ENCODE measurements at regions of chr4 and their contacts with region 1.

Region 1: GRCh38 chr4:15001869-15002658 is at the start of gene CPEB2:
- DNase-seq: peak; percentile 94 to 98
- H3K4me3 ChIP-seq: peak within 1 kb of the TSS; percentile 93 to 95
- H3K27ac ChIP-seq: peak within 1 kb of the TSS; percentile 99 to 100
- H3K4me1 ChIP-seq: peaks cover 0 to 20% (median 0%) of the 10 kb centered on the region in 4 donors
- H3K27me3 ChIP-seq: no peaks in the 10 kb centered on the region
- CTCF ChIP-seq: no peak

Region 2: DNA sequence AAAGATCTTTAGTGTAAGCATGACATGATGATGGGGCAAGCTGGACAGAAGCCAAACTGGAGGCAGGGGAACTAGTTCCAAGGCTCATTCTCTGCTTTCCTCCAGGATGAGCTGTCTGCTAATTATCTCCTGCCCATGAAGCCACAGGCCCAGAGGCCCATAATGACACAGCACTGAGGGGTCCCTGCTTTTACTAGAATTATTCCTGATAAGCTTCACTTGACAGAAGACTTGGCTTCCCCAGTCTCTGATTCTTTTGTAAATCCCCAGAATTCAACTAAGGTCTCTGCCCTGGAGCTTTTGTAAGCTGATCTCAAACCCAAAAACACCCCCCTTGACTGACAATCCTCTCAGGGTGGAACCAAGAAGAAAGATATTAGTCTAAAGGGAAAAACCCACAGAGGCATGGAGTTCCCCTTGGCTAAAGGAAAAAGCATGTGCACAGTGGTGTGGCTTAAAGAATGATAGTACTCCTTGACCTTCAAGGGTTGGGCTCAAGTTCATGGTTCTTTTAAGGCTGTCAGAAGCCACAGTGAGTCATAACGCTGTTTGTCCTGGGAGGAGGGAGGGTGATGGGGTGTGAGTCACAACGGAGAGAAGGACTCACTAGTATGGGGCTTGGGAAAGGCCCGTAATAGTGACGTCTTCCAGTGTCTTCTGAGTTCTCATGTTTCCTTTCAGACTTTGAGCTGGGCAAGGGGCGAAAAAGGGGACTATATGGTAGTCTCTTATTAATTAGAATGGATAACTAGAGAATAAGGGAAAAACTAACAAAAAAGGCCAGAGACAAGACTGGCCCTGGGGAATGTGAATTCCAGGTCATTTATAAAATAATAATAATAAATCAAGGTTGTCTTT is 145.8 kb before region 1 on chr4:
- intact Hi-C with region 1: loop called (anchors 10 kb)
- DNase-seq: peak; percentile 82 to 87
- H3K4me3 ChIP-seq: no peak overlapping the region
- H3K27ac ChIP-seq: peak overlapping the region; percentile 70 to 74
- H3K4me1 ChIP-seq: peaks cover 0 to 29% (median 11%) of the 10 kb centered on the region in 4 donors
- H3K27me3 ChIP-seq: no peaks in the 10 kb centered on the region
- CTCF ChIP-seq: no peak

Region 3: DNA sequence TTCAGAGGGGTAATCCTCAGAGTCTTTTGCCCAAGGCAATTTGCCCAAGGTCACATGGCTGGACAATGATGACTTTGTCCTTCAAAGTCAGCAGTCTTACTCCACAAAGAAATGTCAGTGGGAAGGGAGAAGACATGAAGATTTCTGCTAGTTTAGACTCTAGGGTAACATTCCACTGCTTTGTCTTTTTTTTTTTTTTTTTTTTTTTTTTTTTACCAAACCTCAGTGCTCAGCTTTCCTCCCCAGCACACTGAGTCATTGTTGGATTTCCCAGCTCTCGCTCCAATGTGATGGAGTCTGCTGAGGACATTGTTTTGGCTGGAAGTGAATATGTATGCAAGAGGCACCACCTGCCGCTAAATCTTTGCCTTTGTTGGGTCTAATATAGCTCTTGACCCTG is 418.6 kb after region 1 on chr4:
- intact Hi-C with region 1: loop called (anchors 10 kb)
- DNase-seq: no peak
- H3K4me3 ChIP-seq: no peak overlapping the region
- H3K27ac ChIP-seq: peak overlapping the region; percentile 71 to 75
- H3K4me1 ChIP-seq: peaks cover 0 to 98% (median 52%) of the 10 kb centered on the region in 4 donors
- H3K27me3 ChIP-seq: no peaks in the 10 kb centered on the region
- CTCF ChIP-seq: no peak

Region 4: DNA sequence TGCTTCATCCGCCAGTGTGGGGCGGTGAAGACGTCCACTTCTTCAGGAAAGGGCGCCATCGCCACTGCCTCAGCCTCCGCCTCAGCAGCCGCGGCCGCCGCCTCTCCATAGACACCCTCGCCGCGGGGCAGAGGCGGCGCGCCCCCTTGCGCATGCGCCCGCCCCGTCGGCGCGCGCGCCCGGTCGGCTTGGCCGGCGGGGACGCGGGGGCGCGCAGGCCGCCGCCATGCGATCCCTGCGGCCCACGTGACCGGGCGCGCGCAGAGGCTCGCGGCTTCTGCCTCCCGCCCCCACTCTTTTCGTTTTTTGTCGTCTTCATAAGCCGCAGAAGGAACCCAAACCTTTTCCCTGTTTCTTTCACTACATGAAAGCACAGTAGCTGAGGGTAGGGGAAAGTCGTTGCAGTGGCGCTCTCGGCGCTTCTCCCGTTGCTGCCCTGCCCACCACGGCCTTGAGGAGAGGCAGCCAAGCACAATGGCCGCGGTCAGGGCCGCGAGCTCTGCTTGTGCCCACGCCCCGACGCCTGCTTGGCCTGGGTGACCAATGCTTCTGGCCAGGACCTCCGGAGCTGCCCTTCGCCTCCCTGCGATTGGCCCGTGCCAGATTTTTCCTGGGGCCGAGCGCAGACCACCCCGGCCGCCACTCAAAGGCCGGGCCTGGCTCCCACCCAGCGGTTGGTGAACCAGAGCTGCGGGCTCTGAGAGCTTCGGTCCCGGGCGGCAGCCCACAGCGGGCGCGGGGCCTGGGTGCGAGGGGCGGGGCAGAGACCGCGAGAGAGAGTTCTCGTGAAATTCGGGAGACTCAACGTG is 653.4 kb after region 1 on chr4 and contains the start of gene FBXL5:
- intact Hi-C with region 1: loop called (anchors 1 kb)
- DNase-seq: peak; percentile 74 to 87
- H3K4me3 ChIP-seq: peak within 1 kb of the TSS; percentile 67 to 90
- H3K27ac ChIP-seq: peak within 1 kb of the TSS; percentile 98 to 99
- H3K4me1 ChIP-seq: peaks cover 0 to 60% (median 18%) of the 10 kb centered on the region in 4 donors
- H3K27me3 ChIP-seq: no peaks in the 10 kb centered on the region
- CTCF ChIP-seq: peak in 1 of 2 experiments; percentile 16

Measured in tibial artery (tissue), 4 donors.